ENCODE measurements at regions of chrX and their contacts with region 1.

Region 1: GRCh38 chrX:42664680-42665079 is 113.3 kb downstream of the PPP1R2C start:
- DNase-seq: no peak
- ATAC-seq: no peak
- H3K4me3 Mint-ChIP-seq: no peak overlapping the region
- H3K27ac Mint-ChIP-seq: no peak overlapping the region
- H3K4me1 Mint-ChIP-seq: no peaks in the 10 kb centered on the region
- H3K27me3 Mint-ChIP-seq: no peaks in the 10 kb centered on the region
- CTCF ChIP-seq: no peak

Region 2: GRCh38 chrX:42229533-42229932 is 435.1 kb before region 1 on chrX:
- CTCF ChIA-PET with region 1: no interaction called
- POLR2A ChIA-PET with region 1: no interaction called
- intact Hi-C with region 1: no loop called
- DNase-seq: no peak
- ATAC-seq: no peak
- H3K4me3 Mint-ChIP-seq: no peak overlapping the region
- H3K27ac Mint-ChIP-seq: no peak overlapping the region
- H3K4me1 Mint-ChIP-seq: no peaks in the 10 kb centered on the region
- H3K27me3 Mint-ChIP-seq: no peaks in the 10 kb centered on the region
- CTCF ChIP-seq: no peak

Region 3: DNA sequence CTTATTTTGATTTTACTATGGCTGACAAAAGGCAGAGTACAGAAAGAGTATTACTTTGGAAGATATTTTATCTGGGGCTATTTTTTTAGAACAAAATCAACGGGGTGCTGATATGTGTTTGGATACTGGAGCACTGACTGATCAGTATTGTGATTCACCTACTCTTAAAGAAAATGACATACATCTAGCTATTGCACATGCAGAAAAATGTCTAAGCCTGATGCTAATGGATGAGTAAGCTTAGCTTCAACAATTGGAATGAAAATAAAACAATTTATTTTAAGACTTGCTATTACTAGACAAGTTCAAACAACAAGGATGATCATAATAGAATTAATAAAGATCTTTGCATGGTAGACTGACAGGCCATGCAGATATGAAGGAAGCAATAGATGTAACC is 148.7 kb before region 1 on chrX:
- CTCF ChIA-PET with region 1: no interaction called
- POLR2A ChIA-PET with region 1: no interaction called
- intact Hi-C with region 1: no loop called
- DNase-seq: no peak
- ATAC-seq: no peak
- H3K4me3 Mint-ChIP-seq: no peak overlapping the region
- H3K27ac Mint-ChIP-seq: no peak overlapping the region
- H3K4me1 Mint-ChIP-seq: no peaks in the 10 kb centered on the region
- H3K27me3 Mint-ChIP-seq: no peaks in the 10 kb centered on the region
- CTCF ChIP-seq: no peak

Region 4: DNA sequence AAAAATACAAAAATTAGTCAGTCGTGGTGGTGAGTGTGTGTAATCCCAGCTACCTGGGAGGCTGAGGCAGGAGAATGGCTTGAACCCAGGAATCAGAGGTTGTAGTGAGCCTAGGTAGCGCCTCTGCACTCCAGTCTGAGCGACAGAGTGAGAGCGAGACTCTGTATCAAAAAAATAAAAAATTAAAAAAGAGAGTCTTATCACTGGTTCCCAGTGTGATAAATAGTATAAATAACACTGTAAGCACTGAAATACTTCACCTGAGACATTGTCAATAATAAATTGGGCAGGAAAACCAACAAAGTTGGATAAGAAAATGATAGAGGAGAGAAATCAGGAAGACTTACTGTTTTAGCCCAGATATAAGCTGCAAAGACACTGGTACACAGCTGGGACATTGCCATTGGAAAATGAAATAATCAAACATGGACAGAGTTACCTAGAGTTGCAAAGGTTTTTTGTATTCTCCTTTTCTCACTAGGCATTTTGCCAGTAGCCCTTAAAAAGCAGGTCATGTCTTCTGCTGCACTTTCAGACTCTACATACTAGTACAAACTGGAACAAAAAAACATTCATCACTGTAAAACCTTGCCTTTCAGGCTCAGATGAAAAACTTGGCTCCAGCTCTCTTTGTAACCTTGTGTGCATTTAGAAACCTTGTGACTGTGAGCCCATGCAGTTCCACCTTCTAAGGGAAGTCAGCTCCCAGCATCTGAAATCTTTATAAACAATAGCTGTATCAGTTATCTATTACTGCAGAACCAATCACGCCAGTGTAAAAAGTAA is 168.3 kb after region 1 on chrX:
- CTCF ChIA-PET with region 1: no interaction called
- POLR2A ChIA-PET with region 1: interaction called, 13 read pairs
- intact Hi-C with region 1: no loop called
- DNase-seq: no peak
- ATAC-seq: no peak
- H3K4me3 Mint-ChIP-seq: no peak overlapping the region
- H3K27ac Mint-ChIP-seq: no peak overlapping the region
- H3K4me1 Mint-ChIP-seq: peaks cover 7% of the 10 kb centered on the region
- H3K27me3 Mint-ChIP-seq: no peaks in the 10 kb centered on the region
- CTCF ChIP-seq: no peak

Measured in activated B cell treated with CpG ODN at 0.5 μM for 24 hours (primary cell).